CD14-positive monocyte (primary cell): ENCODE measurements at regions of chr3 and their contacts with region 1.

Region 1: GRCh38 chr3:128665362-128666038 is 14.9 kb upstream of the RPN1 start:
- DNase-seq: no peak
- H3K4me3 ChIP-seq: no peak overlapping the region
- H3K4me3 Mint-ChIP-seq: no peak overlapping the region
- H3K27ac ChIP-seq: no peak overlapping the region
- H3K27ac Mint-ChIP-seq: no peak overlapping the region
- H3K4me1 ChIP-seq: peaks cover 11% of the 10 kb centered on the region in 2 donors
- H3K4me1 Mint-ChIP-seq: peaks cover 12% of the 10 kb centered on the region
- H3K27me3 ChIP-seq: no peaks in the 10 kb centered on the region
- H3K27me3 Mint-ChIP-seq: peaks cover 0 to 6% (median 5%) of the 10 kb centered on the region in 3 donors
- CTCF ChIP-seq: no peak

Region 2: DNA sequence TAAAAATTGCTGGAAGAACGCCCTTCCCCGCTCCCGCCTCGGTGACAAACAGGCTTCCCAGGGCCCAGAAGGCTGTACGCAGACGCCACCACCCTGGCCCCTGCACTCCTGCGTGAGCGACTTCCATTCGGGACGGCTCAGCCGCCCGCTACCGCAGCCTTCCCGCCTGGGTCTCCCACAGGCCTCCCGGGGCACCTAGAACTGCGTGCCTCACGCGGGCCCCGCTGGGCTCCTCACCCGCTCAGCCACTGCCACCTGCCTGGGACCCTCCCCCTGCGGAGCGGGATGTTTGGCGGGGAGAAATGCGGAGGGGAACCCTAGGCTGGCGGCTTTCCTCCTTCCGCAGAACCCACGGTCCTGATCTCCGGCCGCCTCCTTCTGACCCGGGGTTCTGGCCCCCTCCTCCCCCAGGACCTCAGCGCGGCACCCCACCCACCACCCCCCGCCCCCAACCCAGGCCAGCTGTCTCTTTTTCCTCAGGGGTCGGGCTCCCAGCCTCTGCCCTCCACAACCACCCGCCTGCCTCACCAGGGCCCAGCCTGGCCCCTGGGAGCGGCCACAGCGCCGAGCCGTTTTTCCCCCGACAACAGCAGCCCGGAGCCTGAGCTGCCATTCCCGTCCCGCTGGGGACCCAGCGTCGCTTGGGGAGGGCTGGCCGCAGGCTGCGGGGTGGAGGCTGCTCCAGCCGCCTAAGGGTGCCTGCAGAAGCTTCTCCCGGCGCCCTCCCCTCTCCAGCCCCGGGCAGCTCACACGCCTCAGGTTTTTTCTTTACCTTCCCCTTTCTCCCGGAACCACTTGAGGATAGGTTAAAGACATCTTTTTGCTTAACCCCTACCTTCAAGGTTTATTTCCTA is 32.9 kb after region 1 on chr3:
- intact Hi-C with region 1: loop called in 1 of 2 experiments (anchors 1 kb)
- DNase-seq: peak; percentile 15 to 26 (median 22)
- H3K4me3 ChIP-seq: peak overlapping the region; percentile 47 to 85 (median 67)
- H3K4me3 Mint-ChIP-seq: peak overlapping the region; percentile 77 to 88
- H3K27ac ChIP-seq: peak overlapping the region; percentile 4 to 58
- H3K27ac Mint-ChIP-seq: peak overlapping the region in 6 of 7 donors; percentile 25 to 84 (median 64)
- H3K4me1 ChIP-seq: peaks cover 45 to 47% of the 10 kb centered on the region in 2 donors
- H3K4me1 Mint-ChIP-seq: peaks cover 38% of the 10 kb centered on the region
- H3K27me3 ChIP-seq: no peaks in the 10 kb centered on the region
- H3K27me3 Mint-ChIP-seq: peaks cover 0 to 3% (median 2%) of the 10 kb centered on the region in 3 donors
- CTCF ChIP-seq: no peak

Region 3: GRCh38 chr3:128753715-128754114 is 88.2 kb after region 1 on chr3:
- intact Hi-C with region 1: no loop called
- DNase-seq: no peak
- H3K4me3 ChIP-seq: no peak overlapping the region
- H3K4me3 Mint-ChIP-seq: no peak overlapping the region
- H3K27ac ChIP-seq: no peak overlapping the region
- H3K27ac Mint-ChIP-seq: peak overlapping the region in 1 of 7 donors; percentile 27
- H3K4me1 ChIP-seq: peaks cover 25 to 27% of the 10 kb centered on the region in 2 donors
- H3K4me1 Mint-ChIP-seq: peaks cover 65% of the 10 kb centered on the region
- H3K27me3 ChIP-seq: no peaks in the 10 kb centered on the region
- H3K27me3 Mint-ChIP-seq: peaks cover 2 to 4% (median 2%) of the 10 kb centered on the region in 3 donors
- CTCF ChIP-seq: no peak

Region 4: GRCh38 chr3:128946411-128946810 is 280.9 kb after region 1 on chr3:
- intact Hi-C with region 1: no loop called
- DNase-seq: no peak
- H3K4me3 ChIP-seq: no peak overlapping the region
- H3K4me3 Mint-ChIP-seq: no peak overlapping the region
- H3K27ac ChIP-seq: no peak overlapping the region
- H3K27ac Mint-ChIP-seq: no peak overlapping the region
- H3K4me1 ChIP-seq: no peaks in the 10 kb centered on the region
- H3K4me1 Mint-ChIP-seq: no peaks in the 10 kb centered on the region
- H3K27me3 ChIP-seq: no peaks in the 10 kb centered on the region
- H3K27me3 Mint-ChIP-seq: peaks cover 0 to 3% (median 0%) of the 10 kb centered on the region in 3 donors
- CTCF ChIP-seq: no peak